ENCODE measurements at regions of chr3 and their contacts with region 1.

Region 1: DNA sequence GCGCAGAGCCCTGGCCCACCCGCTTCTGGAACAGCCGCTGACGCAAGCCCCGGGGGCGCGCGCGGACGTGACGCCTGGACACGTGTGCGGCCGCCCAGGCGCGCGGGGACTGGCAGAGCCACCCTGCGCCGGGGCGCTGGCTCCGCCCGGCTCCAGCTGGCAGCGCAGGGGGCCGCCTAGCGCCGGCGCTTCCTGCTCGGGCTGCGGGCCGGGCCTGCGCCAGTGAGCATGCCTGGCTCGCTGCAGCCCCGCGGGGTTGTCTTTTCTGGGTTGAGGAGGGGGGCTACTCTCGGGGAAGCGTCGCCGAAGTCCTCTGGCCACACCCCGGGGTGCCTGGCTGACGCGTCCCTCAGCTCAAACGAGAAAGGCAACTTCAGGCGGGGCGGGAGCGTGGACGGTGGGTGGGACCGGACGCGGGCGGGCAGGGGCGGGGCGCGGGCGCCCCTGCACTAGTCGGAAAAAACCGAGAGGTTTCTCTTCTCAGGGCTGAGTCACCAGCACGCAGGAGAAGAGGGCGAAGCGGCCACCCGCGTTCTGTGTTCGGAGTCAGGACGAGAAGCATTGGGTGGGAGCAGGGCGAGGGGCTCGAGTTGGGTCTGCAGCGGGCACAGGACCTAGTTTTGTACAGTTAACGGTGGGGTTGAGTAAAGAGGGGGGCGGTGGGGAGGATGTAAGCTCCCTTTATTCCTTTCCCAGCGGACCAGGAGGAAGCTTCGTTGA is at the start of gene SIAH2:
- DNase-seq: peak; percentile 94
- ATAC-seq: peak; percentile 74
- H3K4me3 Mint-ChIP-seq: peak within 1 kb of the TSS; percentile 99
- H3K27ac Mint-ChIP-seq: peak within 1 kb of the TSS; percentile 100
- H3K4me1 Mint-ChIP-seq: peaks cover 77% of the 10 kb centered on the region
- H3K27me3 Mint-ChIP-seq: no peaks in the 10 kb centered on the region
- CTCF ChIP-seq: no peak
- total RNA-seq, gene SIAH2: 44.5 and 44.7 TPM in 2 replicates

Region 2: DNA sequence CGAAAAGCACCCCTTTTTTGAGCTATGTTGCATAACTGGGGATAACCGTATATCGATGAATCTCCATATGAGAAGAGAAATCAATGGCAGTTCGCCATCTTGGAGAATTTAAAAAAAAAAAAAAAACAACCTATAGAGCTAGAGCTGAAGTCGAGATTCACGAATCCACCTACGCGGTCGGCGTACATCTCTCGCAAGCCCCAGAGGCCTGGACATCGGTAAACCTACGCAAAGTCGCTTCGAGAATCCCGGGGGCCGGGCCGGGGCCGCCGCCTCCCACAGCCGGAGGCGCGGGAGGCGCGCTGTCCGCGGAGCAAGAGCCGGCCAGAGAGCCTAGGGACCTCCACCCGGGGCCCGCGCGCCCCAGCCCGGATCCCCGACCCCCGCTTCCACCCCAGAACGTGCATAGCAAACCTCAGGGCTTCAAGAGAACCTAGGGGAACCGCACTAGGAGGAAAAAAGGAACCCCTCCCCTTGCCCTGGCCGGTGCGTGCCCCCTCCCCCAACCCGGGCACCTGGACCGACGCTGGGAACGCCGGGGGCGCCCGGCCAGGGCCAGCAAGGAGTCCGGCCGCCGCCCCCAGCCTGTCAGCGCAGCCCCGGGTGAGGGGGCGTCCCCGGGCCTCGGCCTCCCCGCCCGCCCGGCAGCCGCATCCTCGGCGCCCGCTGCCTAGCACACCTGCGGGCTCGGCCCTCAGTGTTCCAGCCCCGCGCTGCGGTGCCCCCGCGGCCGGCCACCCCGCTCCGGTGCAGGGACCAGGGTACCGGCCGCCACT is 793.2 kb before region 1 on chr3:
- CTCF ChIA-PET with region 1: no interaction called
- POLR2A ChIA-PET with region 1: no interaction called
- intact Hi-C with region 1: loop called (anchors 10 kb)
- DNase-seq: peak; percentile 76
- ATAC-seq: peak; percentile 76
- H3K4me3 Mint-ChIP-seq: peak overlapping the region; percentile 90
- H3K27ac Mint-ChIP-seq: peak overlapping the region; percentile 53
- H3K4me1 Mint-ChIP-seq: peaks cover 23% of the 10 kb centered on the region
- H3K27me3 Mint-ChIP-seq: peaks cover 15% of the 10 kb centered on the region
- CTCF ChIP-seq: no peak

Region 3: DNA sequence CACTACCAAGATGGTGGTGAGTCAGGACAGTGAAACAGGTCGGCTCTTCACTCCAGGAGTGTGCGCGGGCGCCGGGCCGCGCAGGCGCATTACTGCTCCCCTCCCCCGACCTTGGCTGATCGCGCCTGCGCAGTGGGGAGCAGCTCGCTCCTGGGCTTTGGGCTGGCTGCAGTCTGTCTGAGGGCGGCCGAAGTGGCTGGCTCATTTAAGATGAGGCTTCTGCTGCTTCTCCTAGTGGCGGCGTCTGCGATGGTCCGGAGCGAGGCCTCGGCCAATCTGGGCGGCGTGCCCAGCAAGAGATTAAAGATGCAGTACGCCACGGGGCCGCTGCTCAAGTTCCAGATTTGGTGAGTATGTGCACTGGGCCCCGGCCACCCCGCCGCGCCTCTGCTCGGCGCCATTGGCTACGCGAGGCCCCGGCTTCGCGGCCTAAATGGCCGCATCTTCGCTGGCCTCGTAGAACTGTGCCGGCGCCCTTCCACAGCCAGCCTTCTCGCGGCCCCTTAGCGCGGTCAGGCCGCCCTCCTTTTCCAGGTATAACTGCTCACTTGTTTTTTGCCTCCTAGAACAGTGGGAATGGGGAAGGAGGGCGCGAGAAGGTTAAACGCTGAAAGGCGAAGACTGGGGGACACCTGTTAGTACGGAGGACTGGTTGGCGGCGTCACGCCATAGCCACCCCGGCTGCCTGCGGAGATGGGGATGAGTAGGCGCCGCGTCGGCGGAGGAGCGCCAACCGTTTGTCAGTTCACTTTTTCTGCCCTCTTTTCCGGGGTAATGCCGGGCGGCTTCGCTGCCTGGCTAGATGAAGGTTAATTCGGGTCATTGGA is 159.9 kb before region 1 on chr3 and contains the start of gene SELENOT:
- CTCF ChIA-PET with region 1: interaction called, 3 read pairs
- POLR2A ChIA-PET with region 1: interaction called, 50 read pairs
- intact Hi-C with region 1: loop called (anchors 1 kb)
- DNase-seq: peak; percentile 94
- ATAC-seq: peak; percentile 62
- H3K4me3 Mint-ChIP-seq: peak within 1 kb of the TSS; percentile 100
- H3K27ac Mint-ChIP-seq: peak within 1 kb of the TSS; percentile 100
- H3K4me1 Mint-ChIP-seq: peaks cover 87% of the 10 kb centered on the region
- H3K27me3 Mint-ChIP-seq: no peaks in the 10 kb centered on the region
- CTCF ChIP-seq: no peak
- total RNA-seq, gene SELENOT: 137 and 145 TPM in 2 replicates

Region 4: GRCh38 chr3:150721285-150722130 is 41.8 kb before region 1 on chr3:
- CTCF ChIA-PET with region 1: interaction called, 17 read pairs
- POLR2A ChIA-PET with region 1: interaction called, 43 read pairs
- intact Hi-C with region 1: loop called (anchors 1 kb)
- DNase-seq: no peak
- ATAC-seq: peak; percentile 94
- H3K4me3 Mint-ChIP-seq: no peak overlapping the region
- H3K27ac Mint-ChIP-seq: no peak overlapping the region
- H3K4me1 Mint-ChIP-seq: peaks cover 7% of the 10 kb centered on the region
- H3K27me3 Mint-ChIP-seq: no peaks in the 10 kb centered on the region
- CTCF ChIP-seq: no peak

Region 5: DNA sequence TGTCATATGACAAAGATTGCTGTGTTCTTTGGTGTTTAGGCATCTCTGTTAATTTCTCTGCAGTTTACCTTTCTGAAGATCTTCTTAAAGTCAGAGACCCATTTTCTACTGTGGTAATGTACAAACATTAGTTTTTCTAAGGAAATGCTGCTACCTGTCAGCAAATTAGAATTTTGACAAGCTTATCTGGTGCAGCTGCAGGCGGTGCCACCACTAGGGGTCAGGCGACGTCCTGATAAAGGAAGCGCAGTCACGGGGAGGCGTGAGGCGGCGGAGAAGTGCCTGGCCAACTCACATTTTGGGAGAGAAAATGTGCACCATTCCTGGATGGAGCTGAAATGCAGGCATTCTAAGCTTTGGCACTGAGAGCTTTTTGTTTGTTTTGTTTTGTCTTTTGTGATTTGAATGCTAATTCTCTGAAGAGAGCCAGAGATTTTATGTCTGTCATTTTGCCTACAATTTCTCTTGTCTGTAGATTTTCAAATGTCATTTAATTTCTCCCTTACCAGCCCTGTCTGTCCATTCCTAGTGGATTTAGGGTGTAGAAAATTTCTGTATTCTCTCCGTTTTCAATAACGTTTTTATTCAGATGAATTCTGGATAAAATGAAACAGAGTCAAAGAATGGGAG is 24.6 kb after region 1 on chr3:
- CTCF ChIA-PET with region 1: interaction called, 31 read pairs
- POLR2A ChIA-PET with region 1: interaction called, 11 read pairs
- intact Hi-C with region 1: loop called (anchors 1 kb)
- DNase-seq: peak; percentile 64
- ATAC-seq: peak; percentile 92
- H3K4me3 Mint-ChIP-seq: no peak overlapping the region
- H3K27ac Mint-ChIP-seq: no peak overlapping the region
- H3K4me1 Mint-ChIP-seq: peaks cover 4% of the 10 kb centered on the region
- H3K27me3 Mint-ChIP-seq: peaks cover 6% of the 10 kb centered on the region
- CTCF ChIP-seq: peak; percentile 66

Region 6: DNA sequence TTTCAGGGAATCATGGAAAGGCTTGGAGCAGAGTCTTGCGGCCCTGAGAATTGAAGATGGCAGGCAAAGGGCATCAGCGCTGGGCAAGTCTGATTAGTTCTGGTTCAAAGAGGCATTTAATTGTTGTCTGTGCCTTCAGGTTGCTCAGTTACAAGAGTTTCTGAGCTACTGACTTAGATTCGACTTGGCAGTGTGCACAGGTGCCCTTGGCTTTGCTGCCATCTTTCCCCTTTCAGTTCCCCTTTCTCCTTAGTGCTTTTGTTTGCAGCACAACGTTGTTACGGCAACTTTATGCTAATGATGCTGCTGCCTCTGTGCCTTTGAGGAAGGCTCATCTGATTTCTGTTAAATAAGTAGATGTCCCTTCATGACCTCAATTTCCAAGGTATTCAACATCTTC is 502.6 kb after region 1 on chr3:
- CTCF ChIA-PET with region 1: no interaction called
- POLR2A ChIA-PET with region 1: interaction called, 4 read pairs
- intact Hi-C with region 1: loop called (anchors 1 kb)
- DNase-seq: peak; percentile 44
- ATAC-seq: peak; percentile 87
- H3K4me3 Mint-ChIP-seq: peak overlapping the region; percentile 60
- H3K27ac Mint-ChIP-seq: peak overlapping the region; percentile 98
- H3K4me1 Mint-ChIP-seq: peaks cover 66% of the 10 kb centered on the region
- H3K27me3 Mint-ChIP-seq: no peaks in the 10 kb centered on the region
- CTCF ChIP-seq: no peak

Measured in activated B cell treated with CpG ODN at 0.5 μM for 24 hours (primary cell).